Right ventricle myocardium inferior (tissue), 1 donor: ENCODE measurements at regions of chr10 and their contacts with region 1.

Region 1: GRCh38 chr10:88256013-88256680 is 327.0 kb downstream of the RNLS start:
- DNase-seq: peak; percentile 80
- ATAC-seq: peak; percentile 93

Region 2: DNA sequence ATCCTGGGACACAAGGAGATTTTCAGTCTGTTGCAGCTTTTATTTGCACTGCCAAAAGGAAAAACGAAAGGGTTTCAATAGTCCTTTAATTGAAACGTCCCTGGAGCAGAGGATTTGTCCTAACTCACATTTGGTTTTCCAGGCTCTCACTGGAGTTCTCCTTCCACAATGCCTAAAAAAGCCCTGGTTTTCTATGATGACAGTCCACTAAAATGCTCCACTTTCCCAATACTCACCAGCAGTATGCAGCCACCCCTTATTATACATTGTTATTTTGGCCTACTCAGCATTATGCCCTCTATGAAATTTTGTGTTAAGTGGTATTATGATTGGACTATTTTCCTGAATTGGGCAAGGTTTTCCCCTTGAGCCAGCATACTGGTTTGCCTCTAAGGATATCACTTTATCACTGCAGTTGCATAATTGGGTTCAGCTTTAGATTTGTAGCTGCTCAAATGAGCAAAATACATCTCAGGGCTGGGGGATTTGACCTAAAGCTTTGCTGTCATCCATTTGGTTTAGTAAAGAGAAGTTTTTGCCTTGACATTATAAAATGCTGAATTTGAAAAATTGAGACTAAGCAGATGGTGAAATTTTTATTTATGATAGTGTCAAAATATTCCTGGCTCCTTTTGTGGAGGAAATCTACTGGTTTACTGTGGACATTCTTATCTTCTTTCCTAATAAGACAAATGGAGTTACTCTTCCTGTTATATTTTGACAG is 87.8 kb after region 1 on chr10:
- intact Hi-C with region 1: loop called (anchors 5 kb)
- DNase-seq: no peak
- ATAC-seq: peak; percentile 76